Astrocyte of the cerebellum (primary cell): ENCODE measurements at regions of chr1 and their contacts with region 1.

Region 1: GRCh38 chr1:46442317-46443161 is 47.1 kb upstream of the DMBX1 start:
- DNase-seq: peak; percentile 37
- H3K4me3 ChIP-seq: peak overlapping the region; percentile 30
- CTCF ChIP-seq: peak; percentile 87

Region 2: DNA sequence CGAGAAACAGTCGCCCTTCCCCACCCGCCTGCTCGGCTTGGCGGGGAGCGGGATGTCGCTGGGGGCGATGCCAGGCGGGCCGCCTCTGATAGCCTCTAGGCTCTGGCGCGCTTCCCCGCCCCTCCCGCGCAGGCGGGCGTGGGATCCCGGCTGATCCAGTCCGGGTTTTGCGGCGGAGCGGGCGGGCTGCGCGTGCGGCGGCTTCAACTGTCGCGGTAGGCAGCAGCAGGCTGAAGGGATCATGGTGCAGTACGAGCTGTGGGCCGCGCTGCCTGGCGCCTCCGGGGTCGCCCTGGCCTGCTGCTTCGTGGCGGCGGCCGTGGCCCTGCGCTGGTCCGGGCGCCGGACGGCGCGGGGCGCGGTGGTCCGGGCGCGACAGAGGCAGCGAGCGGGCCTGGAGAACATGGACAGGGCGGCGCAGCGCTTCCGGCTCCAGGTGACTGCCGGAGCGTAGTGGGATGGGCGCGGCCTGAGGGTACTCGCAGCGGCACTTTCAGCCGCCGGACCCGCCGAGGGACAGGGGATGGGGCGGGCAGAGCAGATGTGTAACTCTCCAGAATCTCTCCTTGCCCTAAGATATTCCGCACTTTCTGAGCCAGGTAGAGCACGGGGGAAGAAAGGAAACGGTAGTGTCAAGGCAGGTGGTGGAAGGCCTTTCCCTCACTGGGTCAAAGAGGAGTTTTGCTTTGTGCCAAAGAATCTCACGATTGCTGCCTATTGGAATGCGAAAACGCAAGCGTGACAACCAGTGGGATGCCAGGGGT is 48.2 kb before region 1 on chr1 and contains the start of gene FAAH:
- in situ Hi-C with region 1: no loop called
- DNase-seq: no peak
- H3K4me3 ChIP-seq: peak within 1 kb of the TSS; percentile 27
- CTCF ChIP-seq: no peak

Region 3: DNA sequence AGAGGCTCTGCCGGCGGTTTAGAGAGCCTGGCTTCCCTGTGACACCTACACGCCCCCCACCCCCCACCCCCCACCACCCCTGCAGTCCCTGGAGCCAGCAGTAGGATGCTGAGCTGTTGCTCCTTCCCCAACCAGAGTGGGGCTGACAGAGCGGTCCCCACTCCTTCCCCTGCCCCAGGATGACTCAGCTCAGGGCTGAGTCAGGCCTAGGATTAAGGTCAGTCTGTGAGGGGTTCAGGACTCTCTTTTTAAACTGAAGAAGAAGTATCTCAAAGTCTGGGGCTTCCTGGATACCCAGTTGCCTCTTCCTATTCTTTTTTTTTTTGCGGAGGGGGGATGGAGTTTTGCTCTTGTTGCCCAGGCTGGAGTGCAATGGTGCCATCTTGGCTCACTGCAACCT is 66.2 kb after region 1 on chr1:
- in situ Hi-C with region 1: loop called (anchors 10 kb)
- DNase-seq: no peak
- H3K4me3 ChIP-seq: no peak overlapping the region
- CTCF ChIP-seq: no peak

Region 4: DNA sequence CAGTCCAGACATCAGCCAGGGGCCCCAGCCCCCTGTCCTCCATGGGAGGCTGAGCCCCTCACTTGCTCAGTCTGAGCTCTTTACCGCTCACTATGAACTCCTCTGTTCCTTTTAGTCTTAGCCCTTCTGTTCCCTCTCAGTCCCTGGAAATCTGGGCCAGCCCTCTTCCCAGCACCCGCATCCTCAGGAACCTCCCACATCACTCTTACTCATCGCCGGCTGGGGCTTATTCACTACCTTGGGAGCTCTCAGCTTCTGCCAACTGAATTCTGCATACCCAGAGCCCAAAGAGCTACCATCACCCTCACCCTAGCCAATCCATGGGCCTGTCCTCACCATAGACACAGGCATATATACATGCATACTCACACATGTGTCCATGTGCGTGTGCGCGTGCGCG is 97.4 kb after region 1 on chr1:
- in situ Hi-C with region 1: loop called (anchors 5 kb)
- DNase-seq: no peak
- H3K4me3 ChIP-seq: no peak overlapping the region
- CTCF ChIP-seq: no peak